GM23248 (cell line): ENCODE measurements at regions of chr2 and their contacts with region 1.

Region 1: GRCh38 chr2:231612179-231613053 is 19.8 kb downstream of the TEX44 start:
- DNase-seq: peak; percentile 98
- H3K4me3 ChIP-seq: peak overlapping the region; percentile 52
- H3K27ac ChIP-seq: peak overlapping the region; percentile 100
- H3K4me1 ChIP-seq: peaks cover 12% of the 10 kb centered on the region
- H3K27me3 ChIP-seq: no peaks in the 10 kb centered on the region

Region 2: GRCh38 chr2:230902180-230902899 is 710.1 kb before region 1 on chr2:
- in situ Hi-C with region 1: no loop called
- DNase-seq: peak; percentile 81
- H3K4me3 ChIP-seq: no peak overlapping the region
- H3K27ac ChIP-seq: no peak overlapping the region
- H3K4me1 ChIP-seq: no peaks in the 10 kb centered on the region
- H3K27me3 ChIP-seq: peaks cover 30% of the 10 kb centered on the region

Region 3: GRCh38 chr2:231709981-231710798 is 97.8 kb after region 1 on chr2:
- in situ Hi-C with region 1: loop called (anchors 10 kb)
- DNase-seq: peak; percentile 95
- H3K4me3 ChIP-seq: peak overlapping the region; percentile 77
- H3K27ac ChIP-seq: peak overlapping the region; percentile 92
- H3K4me1 ChIP-seq: peaks cover 14% of the 10 kb centered on the region
- H3K27me3 ChIP-seq: no peaks in the 10 kb centered on the region

Region 4: GRCh38 chr2:232170396-232170795 is 558.0 kb after region 1 on chr2:
- in situ Hi-C with region 1: no loop called
- DNase-seq: no peak
- H3K4me3 ChIP-seq: no peak overlapping the region
- H3K27ac ChIP-seq: no peak overlapping the region
- H3K4me1 ChIP-seq: no peaks in the 10 kb centered on the region
- H3K27me3 ChIP-seq: no peaks in the 10 kb centered on the region